Left cardiac atrium (tissue), 4 donors: ENCODE measurements at regions of chr7 and their contacts with region 1.

Region 1: GRCh38 chr7:74173866-74174605 is at the start of gene EIF4H:
- DNase-seq: peak; percentile 97
- ATAC-seq: peak; percentile 96 to 98
- total RNA-seq, gene EIF4H: 163 to 219 TPM

Region 2: DNA sequence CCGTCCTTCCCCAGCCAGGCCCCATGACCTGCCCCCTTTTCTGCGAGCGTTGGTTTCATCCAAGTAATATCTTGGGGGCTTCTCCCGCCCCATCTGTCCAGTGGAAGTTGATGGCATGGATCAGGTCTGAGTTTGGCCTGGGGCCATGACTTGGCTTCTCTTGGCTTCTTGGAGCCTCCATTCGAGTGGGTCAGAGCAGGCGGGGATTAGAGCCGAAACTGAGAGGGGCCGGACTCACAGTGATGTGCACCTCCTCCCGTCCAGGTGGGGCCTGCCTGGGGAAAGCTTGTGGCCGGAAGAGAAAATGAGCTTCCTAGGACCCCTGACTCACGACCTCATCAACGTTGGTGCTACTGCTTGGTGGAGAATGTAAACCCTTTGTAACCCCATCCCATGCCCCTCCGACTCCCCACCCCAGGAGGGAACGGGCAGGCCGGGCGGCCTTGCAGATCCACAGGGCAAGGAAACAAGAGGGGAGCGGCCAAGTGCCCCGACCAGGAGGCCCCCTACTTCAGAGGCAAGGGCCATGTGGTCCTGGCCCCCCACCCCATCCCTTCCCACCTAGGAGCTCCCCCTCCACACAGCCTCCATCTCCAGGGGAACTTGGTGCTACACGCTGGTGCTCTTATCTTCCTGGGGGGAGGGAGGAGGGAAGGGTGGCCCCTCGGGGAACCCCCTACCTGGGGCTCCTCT is 105.5 kb before region 1 on chr7:
- intact Hi-C with region 1: loop called in 1 of 2 experiments (anchors 5 kb)
- DNase-seq: no peak
- ATAC-seq: peak in 1 of 2 donors; percentile 3

Region 3: DNA sequence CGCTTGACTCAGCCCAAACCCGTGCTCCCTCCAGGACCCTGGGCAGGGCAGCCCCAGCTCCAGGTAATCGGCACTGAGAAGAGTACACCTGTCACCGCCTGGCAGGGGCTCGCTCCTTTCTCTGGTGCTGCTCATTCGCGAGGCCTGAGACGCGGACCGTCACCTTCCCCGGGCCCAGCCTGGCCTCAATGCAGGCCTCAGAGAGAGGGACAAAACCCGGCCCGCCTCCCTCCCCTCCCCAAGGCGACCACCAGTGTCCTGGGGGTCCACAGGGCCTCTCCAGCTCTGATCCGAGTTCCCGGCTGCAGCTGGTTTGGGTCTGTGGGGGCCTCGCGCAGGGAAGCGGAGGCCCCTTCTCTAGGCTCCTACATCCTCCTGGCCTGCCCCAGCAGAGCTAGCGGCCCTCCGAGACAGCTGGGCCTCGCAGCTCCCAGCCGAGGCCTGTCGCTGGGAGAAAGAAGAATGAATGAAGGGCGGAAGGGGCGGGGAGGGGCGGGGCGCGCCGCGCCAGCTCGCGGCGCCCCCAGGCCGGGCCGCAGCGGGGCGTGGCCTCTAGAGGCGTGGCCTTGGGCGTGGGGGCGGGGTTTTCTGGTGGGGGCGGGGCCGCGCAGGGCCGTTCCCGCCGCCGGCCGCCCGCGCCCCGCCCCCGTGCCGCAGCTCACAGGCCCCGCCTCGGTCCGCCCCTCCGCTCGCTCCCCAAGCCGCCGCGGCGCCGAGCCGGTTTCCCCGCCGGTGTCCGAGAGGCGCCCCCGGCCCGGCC is 90.7 kb before region 1 on chr7 and contains the start of gene LIMK1:
- intact Hi-C with region 1: loop called in 1 of 2 experiments (anchors 5 kb)
- DNase-seq: peak; percentile 85
- ATAC-seq: peak; percentile 88 to 96
- total RNA-seq, gene LIMK1: 11.4 to 11.6 TPM

Region 4: GRCh38 chr7:74324531-74325209 is 150.6 kb after region 1 on chr7:
- intact Hi-C with region 1: no loop called
- DNase-seq: peak; percentile 31
- ATAC-seq: peak in 1 of 2 donors; percentile 51